ENCODE measurements at regions of chr3 and their contacts with region 1.

Region 1: DNA sequence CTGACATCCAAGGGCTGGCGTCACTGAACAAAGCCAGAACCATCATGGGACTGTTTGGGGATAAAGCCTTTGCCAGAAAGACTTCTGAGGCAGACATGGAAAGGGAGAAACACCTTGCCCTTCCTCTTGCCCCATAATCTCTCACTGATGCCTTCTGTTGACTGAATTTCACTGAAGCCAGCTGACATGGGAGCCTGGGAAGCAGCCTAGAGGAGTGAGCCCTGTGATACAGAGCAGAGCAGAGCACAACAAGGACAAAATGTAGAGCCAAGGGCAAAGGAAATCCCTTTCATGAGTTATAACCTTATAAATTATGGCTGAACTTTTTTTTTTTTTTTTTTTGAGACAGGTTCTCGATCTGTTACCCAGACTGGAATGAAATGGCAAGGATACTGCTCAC is 9.8 kb upstream of the CNOT10 start:
- DNase-seq: no peak
- H3K4me3 ChIP-seq: no peak overlapping the region
- H3K27ac ChIP-seq: no peak overlapping the region
- H3K4me1 ChIP-seq: no peaks in the 10 kb centered on the region
- H3K27me3 ChIP-seq: no peaks in the 10 kb centered on the region
- CTCF ChIP-seq: no peak

Region 2: GRCh38 chr3:32184187-32184730 is 490.9 kb before region 1 on chr3:
- intact Hi-C with region 1: loop called (anchors 10 kb)
- DNase-seq: no peak
- H3K4me3 ChIP-seq: no peak overlapping the region
- H3K27ac ChIP-seq: no peak overlapping the region
- H3K4me1 ChIP-seq: no peaks in the 10 kb centered on the region
- H3K27me3 ChIP-seq: no peaks in the 10 kb centered on the region
- CTCF ChIP-seq: no peak

Measured in colonic mucosa (tissue), 4 donors.